ENCODE measurements at regions of chr5 and their contacts with region 1.

Region 1: GRCh38 chr5:94618493-94619328 is at the starts of genes KIAA0825 and SLF1:
- DNase-seq: peak; percentile 94
- H3K4me3 Mint-ChIP-seq: peak within 1 kb of the TSS; percentile 94
- H3K27ac Mint-ChIP-seq: peak within 1 kb of the TSS; percentile 94
- H3K4me1 Mint-ChIP-seq: peaks cover 38% of the 10 kb centered on the region
- H3K27me3 Mint-ChIP-seq: no peaks in the 10 kb centered on the region
- total RNA-seq, gene KIAA0825: 0.68 to 0.69 TPM
- total RNA-seq, gene SLF1: 14.5 to 15.9 TPM

Region 2: GRCh38 chr5:94111209-94112004 is 507.3 kb before region 1 on chr5:
- CTCF ChIA-PET with region 1: no interaction called
- POLR2A ChIA-PET with region 1: no interaction called
- intact Hi-C with region 1: loop called (anchors 5 kb)
- DNase-seq: peak; percentile 96
- H3K4me3 Mint-ChIP-seq: peak overlapping the region; percentile 92
- H3K27ac Mint-ChIP-seq: peak overlapping the region; percentile 85
- H3K4me1 Mint-ChIP-seq: peaks cover 26% of the 10 kb centered on the region
- H3K27me3 Mint-ChIP-seq: no peaks in the 10 kb centered on the region

Region 3: GRCh38 chr5:94577466-94578245 is 41.1 kb before region 1 on chr5:
- CTCF ChIA-PET with region 1: no interaction called
- POLR2A ChIA-PET with region 1: interaction called, 4 read pairs
- intact Hi-C with region 1: loop called (anchors 1 kb)
- DNase-seq: no peak
- H3K4me3 Mint-ChIP-seq: no peak overlapping the region
- H3K27ac Mint-ChIP-seq: peak overlapping the region; percentile 25
- H3K4me1 Mint-ChIP-seq: peaks cover 42% of the 10 kb centered on the region
- H3K27me3 Mint-ChIP-seq: no peaks in the 10 kb centered on the region

Region 4: GRCh38 chr5:94693043-94693822 is 74.5 kb after region 1 on chr5:
- CTCF ChIA-PET with region 1: interaction called, 3 read pairs
- POLR2A ChIA-PET with region 1: no interaction called
- intact Hi-C with region 1: loop called (anchors 5 kb)
- DNase-seq: no peak
- H3K4me3 Mint-ChIP-seq: no peak overlapping the region
- H3K27ac Mint-ChIP-seq: no peak overlapping the region
- H3K4me1 Mint-ChIP-seq: peaks cover 2% of the 10 kb centered on the region
- H3K27me3 Mint-ChIP-seq: no peaks in the 10 kb centered on the region

Region 5: DNA sequence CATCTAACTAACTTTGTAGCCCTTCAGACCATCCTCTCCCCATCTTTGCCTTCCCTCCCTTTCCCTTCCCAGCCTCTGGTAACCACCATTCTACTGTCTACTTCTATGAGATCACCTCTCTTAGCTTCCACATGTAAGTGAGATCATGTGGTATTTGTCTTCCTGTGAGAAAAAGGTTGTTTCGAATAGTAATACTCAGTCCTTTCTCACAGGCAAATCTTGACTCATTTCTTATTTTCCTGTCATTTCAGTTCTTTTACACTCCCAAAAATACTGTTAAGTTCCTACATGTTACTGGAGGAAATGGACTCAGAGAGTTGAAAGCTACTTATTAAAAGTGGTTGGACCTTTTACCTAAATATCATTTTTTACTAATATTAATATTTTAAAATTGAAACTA is 81.9 kb after region 1 on chr5:
- CTCF ChIA-PET with region 1: no interaction called
- POLR2A ChIA-PET with region 1: no interaction called
- intact Hi-C with region 1: loop called (anchors 1 kb)
- DNase-seq: no peak
- H3K4me3 Mint-ChIP-seq: no peak overlapping the region
- H3K27ac Mint-ChIP-seq: no peak overlapping the region
- H3K4me1 Mint-ChIP-seq: peaks cover 5% of the 10 kb centered on the region
- H3K27me3 Mint-ChIP-seq: no peaks in the 10 kb centered on the region

Measured in activated CD4-positive, alpha-beta memory T cell treated with anti-CD3 and anti-CD28 coated beads for 36 hours (primary cell).